Activated CD4-positive, alpha-beta memory T cell treated with anti-CD3 and anti-CD28 coated beads, Interleukin-2, amount 10 ng/mL, durations not matched to agents 7 days and 5 days (primary cell): ENCODE measurements at regions of chr11 and their contacts with region 1.

Region 1: DNA sequence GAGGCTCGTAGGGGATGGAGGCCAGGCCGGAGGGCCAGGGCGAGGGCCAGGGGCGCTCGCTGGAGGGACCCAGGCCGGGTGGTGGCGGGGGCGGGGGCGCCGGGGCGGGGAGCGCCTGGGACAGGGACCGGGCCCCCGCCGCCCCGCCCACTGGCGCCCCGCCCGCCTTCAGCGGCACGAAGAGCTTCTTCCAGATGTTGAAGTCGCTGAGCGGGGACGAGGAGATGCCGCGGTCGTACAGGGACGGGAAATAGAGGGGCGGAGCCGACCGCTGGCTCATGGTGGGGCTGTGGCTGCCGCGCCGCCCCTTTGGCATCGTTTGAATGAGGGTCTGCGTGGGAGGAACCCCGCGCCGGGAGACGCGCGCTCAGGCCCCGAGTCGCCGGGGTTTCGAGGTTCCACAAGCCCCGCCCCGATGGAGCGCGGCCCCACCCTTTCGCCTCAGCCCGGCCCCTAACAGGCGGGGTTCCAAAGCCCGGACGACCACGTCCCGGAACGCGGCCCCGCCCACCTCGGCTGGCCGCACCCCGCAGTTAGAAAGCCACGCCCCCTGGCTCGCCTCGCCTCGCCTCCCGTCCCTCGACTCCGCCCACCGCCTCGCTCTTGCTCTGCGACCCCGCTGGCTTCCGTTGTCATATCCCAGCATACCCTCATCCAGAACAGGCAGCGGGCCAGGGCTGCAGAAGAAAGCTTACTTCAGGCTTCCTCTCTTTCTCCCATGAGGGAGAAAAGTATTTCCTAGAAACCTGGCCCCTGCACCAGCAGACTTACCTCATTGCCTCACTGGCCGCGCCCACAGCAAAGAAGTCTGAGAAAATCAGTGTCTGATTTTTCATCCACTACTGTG is at the start of gene C11orf91:
- DNase-seq: peak; percentile 95
- H3K4me3 Mint-ChIP-seq: peak within 1 kb of the TSS; percentile 77
- H3K27ac Mint-ChIP-seq: peak within 1 kb of the TSS; percentile 63
- H3K4me1 Mint-ChIP-seq: peaks cover 21% of the 10 kb centered on the region
- H3K27me3 Mint-ChIP-seq: peaks cover 27% of the 10 kb centered on the region
- total RNA-seq, gene C11orf91: not detected

Region 2: DNA sequence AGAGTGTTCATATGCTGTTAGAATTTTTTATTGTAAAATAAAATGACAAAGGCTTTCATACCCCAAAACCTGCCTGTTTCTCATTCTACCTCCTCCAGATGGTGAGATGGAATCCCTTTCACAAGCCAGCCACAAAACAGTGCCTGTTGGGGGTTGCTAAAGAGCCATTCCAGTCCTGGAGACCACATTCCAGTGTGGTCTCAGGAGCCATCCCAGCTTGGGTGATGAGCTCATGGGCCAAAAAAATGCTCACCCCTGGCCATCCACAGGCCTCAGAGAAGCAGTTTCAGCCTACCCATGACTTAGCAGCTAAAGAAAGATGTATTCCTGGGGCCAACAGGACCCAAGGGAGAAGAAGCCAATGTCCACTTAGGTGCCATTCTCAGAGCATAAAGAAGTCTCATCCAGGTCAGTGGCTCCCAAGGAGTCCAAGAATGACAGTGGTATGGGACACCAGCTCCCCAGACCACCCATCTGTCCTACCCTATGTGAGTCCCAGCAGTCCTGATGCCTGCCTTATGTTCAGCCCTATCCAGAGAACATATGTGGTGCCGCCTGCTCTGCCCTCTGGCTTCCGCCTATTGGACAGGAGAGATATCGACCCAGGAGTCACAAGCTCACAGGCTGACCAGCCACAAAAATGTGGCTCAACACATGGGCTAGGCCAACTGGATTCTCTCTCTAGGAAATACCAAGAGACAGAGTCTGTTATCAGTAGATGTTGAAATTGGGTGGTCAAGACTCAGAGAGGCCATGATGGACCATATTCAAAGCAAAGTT is 26.4 kb before region 1 on chr11:
- CTCF ChIA-PET with region 1: no interaction called
- POLR2A ChIA-PET with region 1: no interaction called
- DNase-seq: no peak
- H3K4me3 Mint-ChIP-seq: no peak overlapping the region
- H3K27ac Mint-ChIP-seq: no peak overlapping the region
- H3K4me1 Mint-ChIP-seq: peaks cover 22% of the 10 kb centered on the region
- H3K27me3 Mint-ChIP-seq: peaks cover 27% of the 10 kb centered on the region

Region 3: DNA sequence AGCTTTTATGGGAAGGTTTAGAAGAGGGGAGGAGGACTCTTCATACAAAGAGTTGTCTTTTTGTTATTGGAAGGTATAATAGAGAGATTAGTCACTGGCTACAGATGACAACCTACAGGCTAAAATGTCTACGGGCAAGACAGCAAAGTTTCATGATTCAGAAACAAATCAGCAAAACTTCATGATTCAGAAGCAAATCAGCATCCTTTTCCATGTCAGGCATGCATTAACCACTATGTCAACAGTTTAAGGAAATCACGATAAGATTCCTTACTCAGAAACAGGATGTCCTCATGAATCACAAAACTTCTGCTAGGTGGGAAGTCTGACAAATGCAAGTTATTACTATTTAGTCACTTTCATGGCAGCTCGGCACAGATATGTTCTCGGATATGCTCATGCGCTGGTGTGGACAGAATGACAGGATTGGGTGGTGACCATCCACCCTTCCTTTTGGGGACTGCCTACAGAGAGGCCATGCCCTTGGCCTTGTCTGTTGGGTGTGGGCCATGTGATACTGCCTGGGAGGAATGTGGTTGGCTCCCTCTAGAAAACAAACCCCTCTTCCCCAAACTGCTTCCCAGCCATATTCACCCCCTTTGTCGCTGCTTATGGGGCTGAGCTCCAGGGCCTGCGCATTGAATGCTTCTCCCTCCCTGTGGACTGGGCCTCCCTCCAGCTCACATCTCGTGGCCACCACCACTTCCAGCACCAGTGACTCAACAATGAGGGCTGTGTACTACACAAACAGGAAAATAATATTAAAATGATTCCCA is 10.2 kb before region 1 on chr11:
- CTCF ChIA-PET with region 1: interaction called, 3 read pairs
- POLR2A ChIA-PET with region 1: interaction called, 10 read pairs
- DNase-seq: no peak
- H3K4me3 Mint-ChIP-seq: no peak overlapping the region
- H3K27ac Mint-ChIP-seq: no peak overlapping the region
- H3K4me1 Mint-ChIP-seq: peaks cover 5% of the 10 kb centered on the region
- H3K27me3 Mint-ChIP-seq: peaks cover 3% of the 10 kb centered on the region

Region 4: DNA sequence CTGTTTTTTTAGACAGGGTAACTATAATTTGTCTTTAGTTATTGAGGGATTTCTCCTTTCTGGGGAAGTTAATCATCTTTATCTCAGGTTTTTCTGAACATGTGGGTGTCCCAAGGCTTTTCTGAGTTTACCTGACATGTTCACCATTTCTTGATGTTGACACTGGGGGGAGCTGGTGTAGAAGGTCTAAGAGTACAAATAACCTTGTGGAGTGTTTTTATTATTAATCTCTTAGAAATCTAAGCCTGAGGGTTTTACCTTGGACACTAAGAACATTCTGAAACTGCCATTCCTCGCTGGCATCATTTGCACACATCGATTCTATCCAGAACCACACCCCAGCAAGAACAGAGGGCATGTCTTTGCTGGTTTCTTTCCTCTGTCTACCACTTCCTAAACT is 15.6 kb after region 1 on chr11:
- CTCF ChIA-PET with region 1: interaction called, 15 read pairs
- POLR2A ChIA-PET with region 1: interaction called, 9 read pairs
- DNase-seq: no peak
- H3K4me3 Mint-ChIP-seq: no peak overlapping the region
- H3K27ac Mint-ChIP-seq: no peak overlapping the region
- H3K4me1 Mint-ChIP-seq: peaks cover 14% of the 10 kb centered on the region
- H3K27me3 Mint-ChIP-seq: no peaks in the 10 kb centered on the region

Region 5: GRCh38 chr11:34250732-34251639 is 550.3 kb after region 1 on chr11:
- CTCF ChIA-PET with region 1: no interaction called
- POLR2A ChIA-PET with region 1: no interaction called
- DNase-seq: peak; percentile 82
- H3K4me3 Mint-ChIP-seq: peak overlapping the region; percentile 9
- H3K27ac Mint-ChIP-seq: peak overlapping the region; percentile 33
- H3K4me1 Mint-ChIP-seq: peaks cover 58% of the 10 kb centered on the region
- H3K27me3 Mint-ChIP-seq: peaks cover 14% of the 10 kb centered on the region